ENCODE measurements at regions of chr15 and their contacts with region 1.

Region 1: DNA sequence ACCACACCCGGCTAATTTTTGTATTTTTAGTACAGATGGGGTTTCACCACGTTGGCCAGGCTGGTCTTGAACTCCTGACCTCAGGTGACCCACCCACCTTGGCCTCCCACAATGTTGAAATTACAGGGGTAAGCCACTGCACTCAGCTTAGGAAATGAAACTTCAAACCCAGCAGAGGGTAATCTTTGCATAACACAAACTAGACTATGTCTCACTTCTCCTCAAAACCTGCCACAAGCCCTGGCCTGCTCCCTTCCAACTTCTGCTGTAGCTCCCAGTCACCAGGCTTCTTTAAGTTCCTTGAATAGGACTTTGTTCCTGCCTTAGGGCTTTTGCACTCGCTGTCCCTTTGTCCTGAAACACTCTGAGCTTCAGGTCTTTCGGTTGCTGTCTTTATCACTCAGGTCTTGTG is 39.2 kb upstream of the SEMA4B start:
- DNase-seq: peak in 1 of 5 donors; percentile 34
- H3K4me3 ChIP-seq: no peak overlapping the region
- H3K27ac ChIP-seq: no peak overlapping the region
- H3K4me1 ChIP-seq: peaks cover 3 to 18% (median 15%) of the 10 kb centered on the region in 3 donors
- H3K27me3 ChIP-seq: no peaks in the 10 kb centered on the region
- CTCF ChIP-seq: no peak

Region 2: DNA sequence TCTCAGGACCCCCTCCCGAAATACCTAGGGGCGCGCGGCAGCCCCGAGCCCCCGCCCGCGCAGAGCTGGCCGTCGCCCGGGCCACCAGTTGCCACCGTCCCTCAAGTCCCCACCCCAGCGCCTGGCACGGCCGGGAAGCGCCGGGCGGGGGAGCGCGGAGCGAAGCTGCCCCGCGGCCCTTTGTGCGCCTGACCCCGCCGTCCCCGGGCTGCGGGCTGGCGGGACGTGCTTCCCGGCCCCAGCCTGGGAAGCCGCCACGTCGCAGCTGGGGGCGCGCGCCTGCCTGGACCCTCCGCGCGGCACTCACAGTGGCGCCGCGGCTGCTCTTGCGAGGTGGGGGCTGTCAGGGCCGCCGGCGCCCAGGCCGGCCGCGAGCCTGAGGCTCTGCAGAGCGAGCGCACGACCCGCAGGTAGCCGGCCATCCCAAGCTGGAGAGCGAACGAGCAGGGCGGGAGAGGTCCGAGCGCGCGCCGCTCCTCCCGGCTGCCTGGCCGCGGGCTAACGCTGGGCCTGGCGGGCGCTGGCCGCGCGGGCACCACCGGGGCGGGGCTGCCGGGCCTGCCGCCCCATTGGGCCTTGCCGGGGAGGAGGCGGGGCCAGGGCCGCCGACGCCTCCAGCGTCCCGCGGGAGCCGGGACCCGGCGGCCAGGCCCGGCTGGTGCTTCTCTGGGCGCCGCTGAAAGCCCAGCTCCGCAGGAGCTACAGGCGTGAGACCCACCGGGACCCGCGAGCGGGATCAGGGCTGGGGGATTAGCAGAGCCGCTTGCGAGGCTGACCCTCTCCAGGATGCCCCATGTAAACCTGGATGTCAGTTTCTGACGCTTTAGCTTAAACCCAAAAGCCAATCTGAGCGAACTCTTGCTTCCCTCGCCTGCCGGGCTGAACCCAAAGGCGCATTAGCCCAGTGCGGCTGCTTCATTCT is 59.7 kb before region 1 on chr15 and contains the start of gene IDH2:
- intact Hi-C with region 1: no loop called
- DNase-seq: peak; percentile 86 to 95 (median 93)
- H3K4me3 ChIP-seq: peak within 1 kb of the TSS; percentile 70 to 83 (median 81)
- H3K27ac ChIP-seq: peak within 1 kb of the TSS; percentile 96 to 97
- H3K4me1 ChIP-seq: peaks cover 0 to 34% (median 22%) of the 10 kb centered on the region in 3 donors
- H3K27me3 ChIP-seq: no peaks in the 10 kb centered on the region
- CTCF ChIP-seq: no peak
- total RNA-seq, gene IDH2: 87.0 TPM

Region 3: GRCh38 chr15:90225504-90226234 is 63.7 kb after region 1 on chr15:
- intact Hi-C with region 1: loop called (anchors 5 kb)
- DNase-seq: no peak
- H3K4me3 ChIP-seq: no peak overlapping the region
- H3K27ac ChIP-seq: no peak overlapping the region
- H3K4me1 ChIP-seq: peaks cover 0 to 13% (median 9%) of the 10 kb centered on the region in 3 donors
- H3K27me3 ChIP-seq: no peaks in the 10 kb centered on the region
- CTCF ChIP-seq: no peak